Sigmoid colon (tissue), 7 donors: ENCODE measurements at regions of chr1 and their contacts with region 1.

Region 1: GRCh38 chr1:15899266-15899665 is 51.8 kb downstream of the SPEN start:
- DNase-seq: no peak
- H3K4me3 ChIP-seq: no peak overlapping the region
- H3K27ac ChIP-seq: peak overlapping the region in 1 of 4 donors; percentile 34
- H3K4me1 ChIP-seq: peaks cover 0 to 47% (median 32%) of the 10 kb centered on the region in 4 donors
- H3K27me3 ChIP-seq: no peaks in the 10 kb centered on the region
- CTCF ChIP-seq: no peak
- EP300 ChIP-seq: no peak
- POLR2A ChIP-seq: no peak

Region 2: GRCh38 chr1:15409388-15410222 is 489.7 kb before region 1 on chr1 and contains the start of gene EFHD2:
- intact Hi-C with region 1: no loop called
- DNase-seq: peak; percentile 92
- H3K4me3 ChIP-seq: peak within 1 kb of the TSS; percentile 73 to 97 (median 92)
- H3K27ac ChIP-seq: peak within 1 kb of the TSS; percentile 79 to 88 (median 82)
- H3K4me1 ChIP-seq: peaks cover 0 to 61% (median 50%) of the 10 kb centered on the region in 4 donors
- H3K27me3 ChIP-seq: no peaks in the 10 kb centered on the region
- CTCF ChIP-seq: no peak
- EP300 ChIP-seq: no peak
- POLR2A ChIP-seq: no peak
- total RNA-seq, gene EFHD2: 32.7 to 47.4 (median 37.3) TPM

Region 3: DNA sequence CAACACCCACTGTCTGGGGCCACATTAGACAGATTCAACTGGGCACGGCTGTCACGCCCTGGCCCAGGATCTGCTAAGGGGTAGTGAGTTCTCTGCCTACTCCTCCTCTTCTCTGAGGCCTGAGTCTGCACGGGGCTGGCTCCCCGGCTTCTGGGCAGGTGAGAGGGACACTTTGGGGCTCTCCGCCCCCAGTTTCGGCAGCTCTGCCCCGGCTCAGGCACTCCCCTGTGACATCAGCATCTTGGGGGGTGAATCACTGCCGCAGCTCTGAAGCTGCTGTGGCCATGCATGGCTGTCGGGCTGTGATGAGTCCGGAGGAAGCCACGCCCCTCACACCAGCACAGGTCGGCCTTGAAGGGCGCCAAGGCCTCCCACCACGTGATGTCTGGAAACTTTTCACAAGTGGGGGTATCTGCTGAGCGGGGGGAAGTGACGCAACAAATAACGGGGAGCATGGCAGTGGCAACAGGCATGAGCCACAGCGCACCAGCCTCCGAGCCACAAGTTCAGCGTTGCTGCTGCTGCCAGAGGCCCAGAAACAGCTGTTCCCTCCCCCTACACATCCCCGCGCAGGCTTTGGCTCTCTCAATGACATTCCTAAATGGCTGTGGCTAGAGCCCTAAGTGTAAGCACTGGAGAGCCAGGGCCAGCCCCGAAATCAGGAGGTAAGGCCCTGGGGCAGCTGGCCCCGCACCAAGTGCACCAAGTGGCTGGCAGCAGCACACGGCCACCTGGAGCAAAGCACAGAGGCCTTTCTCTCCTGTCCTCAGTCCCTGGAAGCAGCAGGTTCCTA is 50.4 kb after region 1 on chr1:
- intact Hi-C with region 1: loop called (anchors 5 kb)
- DNase-seq: peak; percentile 99
- H3K4me3 ChIP-seq: peak overlapping the region in 3 of 4 donors; percentile 20 to 35 (median 33)
- H3K27ac ChIP-seq: peak overlapping the region; percentile 78 to 96 (median 89)
- H3K4me1 ChIP-seq: peaks cover 0 to 69% (median 63%) of the 10 kb centered on the region in 4 donors
- H3K27me3 ChIP-seq: no peaks in the 10 kb centered on the region
- CTCF ChIP-seq: no peak
- EP300 ChIP-seq: peak in 2 of 4 donors; percentile 3 to 92
- POLR2A ChIP-seq: no peak